Mammary epithelial cell (primary cell): ENCODE measurements at regions of chr7 and their contacts with region 1.

Region 1: GRCh38 chr7:894164-894867 is 18.0 kb downstream of the GET4 start:
- DNase-seq: no peak
- H3K4me3 ChIP-seq: no peak overlapping the region
- H3K27ac ChIP-seq: no peak overlapping the region
- H3K4me1 ChIP-seq: no peaks in the 10 kb centered on the region
- H3K27me3 ChIP-seq: no peaks in the 10 kb centered on the region
- CTCF ChIP-seq: no peak

Region 2: DNA sequence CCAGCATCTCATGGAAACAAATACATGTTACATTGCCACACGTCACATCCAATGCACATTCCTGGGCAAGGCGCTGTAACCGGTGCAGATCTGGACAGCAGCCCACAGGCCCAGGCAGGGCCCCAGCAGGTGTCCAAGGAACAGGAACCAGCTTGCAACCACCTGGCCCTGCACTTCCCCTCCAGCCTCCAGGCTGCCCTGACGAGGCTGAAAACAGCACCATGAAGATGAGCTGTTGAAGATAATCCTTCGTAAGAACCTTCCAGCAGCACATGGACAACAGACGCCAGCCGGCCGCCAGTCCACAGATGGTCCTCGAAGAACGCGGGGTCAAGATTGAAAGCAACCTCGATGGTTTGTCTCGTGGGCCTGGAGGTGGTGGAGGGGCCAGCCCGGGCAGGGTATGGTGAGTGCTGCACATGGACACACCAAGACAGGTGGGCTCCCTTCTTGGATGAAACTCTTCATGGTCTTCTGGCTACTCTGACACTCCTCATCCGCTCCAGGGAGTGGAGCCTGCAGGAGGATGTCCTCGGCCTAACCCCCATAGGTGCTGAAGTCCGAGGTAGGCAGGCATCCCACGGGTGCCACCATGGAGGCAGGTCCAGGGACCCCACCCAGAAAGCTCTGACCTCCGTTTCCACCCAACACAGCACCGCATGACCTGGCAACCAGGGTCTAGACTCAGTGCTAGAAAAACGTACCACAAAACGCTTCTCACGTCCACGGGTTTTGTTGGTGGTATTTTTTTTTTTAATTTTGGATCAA is 397.6 kb before region 1 on chr7:
- CTCF ChIA-PET with region 1: no interaction called
- dilution Hi-C with region 1: loop called (anchors 5 kb)
- in situ Hi-C with region 1: no loop called
- intact Hi-C with region 1: no loop called
- DNase-seq: peak; percentile 90
- H3K4me3 ChIP-seq: no peak overlapping the region
- H3K27ac ChIP-seq: peak overlapping the region; percentile 56
- H3K4me1 ChIP-seq: peaks cover 30% of the 10 kb centered on the region
- H3K27me3 ChIP-seq: no peaks in the 10 kb centered on the region
- CTCF ChIP-seq: peak in 1 of 2 donors; percentile 18

Region 3: DNA sequence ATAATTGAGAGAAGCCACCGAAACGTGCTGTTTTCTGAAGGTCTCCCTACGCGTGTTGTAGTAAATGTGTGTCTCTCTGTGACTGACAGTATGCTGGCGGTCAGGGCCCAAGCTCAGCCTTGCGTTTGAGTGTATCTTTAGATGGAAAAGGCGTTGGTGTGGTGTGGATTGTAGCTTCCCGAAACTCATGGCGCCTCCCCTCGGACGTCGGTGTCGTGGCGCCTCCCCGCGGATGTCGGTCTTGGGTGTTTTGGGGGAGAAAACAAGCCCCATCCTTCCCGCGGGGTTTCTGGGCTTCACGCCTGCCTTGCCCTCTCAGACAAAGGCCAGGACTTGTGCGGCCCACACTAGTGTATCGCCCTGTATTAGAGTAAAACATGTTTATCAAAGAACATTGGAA is 49.2 kb before region 1 on chr7:
- CTCF ChIA-PET with region 1: no interaction called
- dilution Hi-C with region 1: no loop called
- in situ Hi-C with region 1: no loop called
- intact Hi-C with region 1: no loop called
- DNase-seq: no peak
- H3K4me3 ChIP-seq: no peak overlapping the region
- H3K27ac ChIP-seq: no peak overlapping the region
- H3K4me1 ChIP-seq: no peaks in the 10 kb centered on the region
- H3K27me3 ChIP-seq: no peaks in the 10 kb centered on the region
- CTCF ChIP-seq: no peak

Region 4: GRCh38 chr7:964401-965231 is 70.3 kb after region 1 on chr7:
- CTCF ChIA-PET with region 1: no interaction called
- dilution Hi-C with region 1: loop called (anchors 5 kb)
- in situ Hi-C with region 1: no loop called
- intact Hi-C with region 1: no loop called
- DNase-seq: no peak
- H3K4me3 ChIP-seq: no peak overlapping the region
- H3K27ac ChIP-seq: no peak overlapping the region
- H3K4me1 ChIP-seq: no peaks in the 10 kb centered on the region
- H3K27me3 ChIP-seq: no peaks in the 10 kb centered on the region
- CTCF ChIP-seq: peak; percentile 4 to 17

Region 5: GRCh38 chr7:1044191-1045068 is 150.1 kb after region 1 on chr7 and contains the start of gene GPR146:
- CTCF ChIA-PET with region 1: no interaction called
- dilution Hi-C with region 1: loop called (anchors 5 kb)
- in situ Hi-C with region 1: no loop called
- intact Hi-C with region 1: no loop called
- DNase-seq: peak; percentile 95
- H3K4me3 ChIP-seq: peak within 1 kb of the TSS; percentile 47 to 74 (median 51)
- H3K27ac ChIP-seq: peak within 1 kb of the TSS; percentile 65
- H3K4me1 ChIP-seq: peaks cover 15% of the 10 kb centered on the region
- H3K27me3 ChIP-seq: no peaks in the 10 kb centered on the region
- CTCF ChIP-seq: peak; percentile 43 to 73
- total RNA-seq, gene GPR146: 0.17 to 0.61 TPM

Region 6: DNA sequence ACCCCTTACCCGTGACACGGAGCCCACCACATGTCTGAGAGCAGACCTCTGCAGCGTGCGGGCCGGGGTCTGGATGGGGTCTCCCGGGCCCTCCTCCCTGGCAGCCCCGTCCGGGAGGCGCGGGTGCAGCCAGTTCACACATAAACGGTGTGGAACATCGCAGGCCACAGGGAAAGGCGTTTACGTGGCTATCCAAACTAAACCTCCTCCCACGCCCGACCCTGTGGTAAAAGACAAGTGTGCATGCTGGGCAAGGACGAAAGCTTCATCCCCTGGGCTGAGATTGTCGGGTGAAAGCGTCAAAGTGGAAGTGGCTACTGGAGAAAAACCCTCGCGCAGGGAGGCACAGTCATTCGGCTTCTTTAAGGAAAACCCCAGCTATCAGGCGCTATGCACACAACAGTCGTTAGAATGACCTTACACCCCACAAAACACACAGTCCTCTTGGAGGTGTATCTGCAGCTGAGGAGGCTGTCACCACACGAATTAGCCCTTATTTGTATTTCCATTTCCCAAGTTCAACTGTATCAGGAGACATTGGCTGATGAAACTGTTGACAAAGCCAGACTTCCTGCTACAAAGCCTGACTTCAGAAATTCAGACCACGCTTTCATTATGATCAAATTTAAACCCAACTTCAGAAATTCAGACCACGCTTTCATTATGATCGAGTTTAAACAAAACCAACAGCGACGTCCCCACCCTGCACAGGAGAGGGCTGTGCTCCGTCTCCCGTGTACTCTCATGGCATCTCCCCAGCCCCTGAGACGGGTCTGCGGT is 208.9 kb after region 1 on chr7:
- CTCF ChIA-PET with region 1: no interaction called
- dilution Hi-C with region 1: loop called (anchors 5 kb)
- in situ Hi-C with region 1: no loop called
- intact Hi-C with region 1: no loop called
- DNase-seq: no peak
- H3K4me3 ChIP-seq: no peak overlapping the region
- H3K27ac ChIP-seq: no peak overlapping the region
- H3K4me1 ChIP-seq: no peaks in the 10 kb centered on the region
- H3K27me3 ChIP-seq: no peaks in the 10 kb centered on the region
- CTCF ChIP-seq: no peak

Region 7: DNA sequence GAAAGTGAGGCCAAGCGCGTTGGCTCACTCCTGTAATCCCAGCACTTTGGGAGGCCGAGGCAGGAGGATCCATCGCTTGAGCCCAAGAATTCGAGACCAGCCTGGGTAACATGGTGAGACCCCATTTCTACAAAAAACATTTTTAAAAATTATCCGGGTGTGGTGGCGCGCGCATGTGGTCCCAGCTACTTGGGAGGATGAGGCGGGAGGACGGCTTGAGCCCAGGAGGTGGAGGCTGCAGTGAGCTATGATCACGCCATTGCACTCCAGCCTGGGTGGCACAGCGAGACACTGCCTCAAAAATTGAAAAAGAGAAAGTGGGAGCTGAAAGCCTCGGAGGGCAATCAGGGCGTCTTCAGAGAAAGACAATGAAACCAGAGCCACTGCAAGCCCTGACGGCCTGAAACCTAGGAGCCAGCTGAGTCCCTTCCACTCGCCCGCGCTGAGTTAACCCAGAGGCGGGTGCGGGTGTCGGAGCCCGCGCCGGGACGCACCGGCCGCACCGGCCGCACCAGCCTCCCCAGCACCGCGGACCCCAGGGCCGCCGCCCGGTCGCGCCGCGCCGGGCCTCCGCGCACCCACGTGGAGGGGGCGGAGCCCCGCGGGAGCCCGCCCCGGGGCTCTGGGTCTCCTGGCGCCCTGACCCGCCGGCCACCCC is 243.3 kb after region 1 on chr7:
- CTCF ChIA-PET with region 1: no interaction called
- dilution Hi-C with region 1: loop called (anchors 5 kb)
- in situ Hi-C with region 1: no loop called
- intact Hi-C with region 1: no loop called
- DNase-seq: peak; percentile 21
- H3K4me3 ChIP-seq: peak overlapping the region; percentile 79 to 90 (median 89)
- H3K27ac ChIP-seq: peak overlapping the region; percentile 93
- H3K4me1 ChIP-seq: peaks cover 6% of the 10 kb centered on the region
- H3K27me3 ChIP-seq: no peaks in the 10 kb centered on the region
- CTCF ChIP-seq: no peak

Region 8: DNA sequence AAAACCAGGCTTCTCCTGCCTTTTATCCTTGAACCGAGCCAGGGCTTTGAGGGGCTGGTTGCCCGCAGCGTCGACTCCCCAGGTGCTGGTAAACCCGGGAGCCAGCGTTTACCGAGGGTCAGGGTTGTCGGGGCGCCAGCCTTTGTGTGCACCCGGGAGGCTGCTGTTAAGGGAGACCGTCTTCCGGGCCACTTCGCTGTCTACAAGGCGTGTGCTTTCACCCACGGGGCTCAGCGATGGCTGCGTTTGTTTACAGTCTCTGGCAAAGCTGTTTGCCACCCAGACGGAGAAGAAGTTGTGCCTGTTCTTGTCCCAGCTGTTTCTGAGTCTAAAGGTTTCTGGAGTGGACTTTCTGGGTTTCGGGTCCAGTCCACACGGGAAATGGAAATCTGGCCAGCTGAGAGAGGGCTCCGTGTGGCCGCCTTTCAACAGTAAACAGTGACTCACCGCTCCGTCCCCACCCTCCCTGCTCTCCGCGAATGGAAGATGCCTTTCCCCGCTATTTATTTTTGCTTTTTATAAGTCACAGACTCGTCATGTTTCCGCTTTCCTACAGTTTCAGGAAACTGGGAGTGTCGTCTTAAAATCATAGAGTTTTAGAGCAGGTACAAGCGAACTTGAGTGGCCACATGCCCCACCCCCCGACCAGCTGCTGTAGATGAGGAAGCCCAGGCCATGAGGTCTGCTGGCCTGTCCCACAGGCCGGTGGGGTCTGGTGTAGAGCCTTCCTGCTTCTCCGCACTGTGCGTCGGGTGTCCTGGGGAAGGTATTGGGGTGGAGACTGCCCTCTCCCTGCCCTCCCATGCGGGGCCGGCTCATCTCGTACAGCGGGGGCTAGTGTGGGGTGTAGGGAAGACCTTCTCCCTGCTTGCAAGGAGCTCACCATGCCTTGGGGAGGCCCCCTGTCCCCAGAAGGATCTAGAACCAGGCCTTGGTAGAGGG is 638.4 kb after region 1 on chr7:
- CTCF ChIA-PET with region 1: no interaction called
- dilution Hi-C with region 1: no loop called
- in situ Hi-C with region 1: no loop called
- intact Hi-C with region 1: no loop called
- DNase-seq: peak; percentile 24
- H3K4me3 ChIP-seq: no peak overlapping the region
- H3K27ac ChIP-seq: no peak overlapping the region
- H3K4me1 ChIP-seq: peaks cover 37% of the 10 kb centered on the region
- H3K27me3 ChIP-seq: no peaks in the 10 kb centered on the region
- CTCF ChIP-seq: no peak